MCF 10A (cell line): ENCODE measurements at regions of chrX and their contacts with region 1.

Region 1: DNA sequence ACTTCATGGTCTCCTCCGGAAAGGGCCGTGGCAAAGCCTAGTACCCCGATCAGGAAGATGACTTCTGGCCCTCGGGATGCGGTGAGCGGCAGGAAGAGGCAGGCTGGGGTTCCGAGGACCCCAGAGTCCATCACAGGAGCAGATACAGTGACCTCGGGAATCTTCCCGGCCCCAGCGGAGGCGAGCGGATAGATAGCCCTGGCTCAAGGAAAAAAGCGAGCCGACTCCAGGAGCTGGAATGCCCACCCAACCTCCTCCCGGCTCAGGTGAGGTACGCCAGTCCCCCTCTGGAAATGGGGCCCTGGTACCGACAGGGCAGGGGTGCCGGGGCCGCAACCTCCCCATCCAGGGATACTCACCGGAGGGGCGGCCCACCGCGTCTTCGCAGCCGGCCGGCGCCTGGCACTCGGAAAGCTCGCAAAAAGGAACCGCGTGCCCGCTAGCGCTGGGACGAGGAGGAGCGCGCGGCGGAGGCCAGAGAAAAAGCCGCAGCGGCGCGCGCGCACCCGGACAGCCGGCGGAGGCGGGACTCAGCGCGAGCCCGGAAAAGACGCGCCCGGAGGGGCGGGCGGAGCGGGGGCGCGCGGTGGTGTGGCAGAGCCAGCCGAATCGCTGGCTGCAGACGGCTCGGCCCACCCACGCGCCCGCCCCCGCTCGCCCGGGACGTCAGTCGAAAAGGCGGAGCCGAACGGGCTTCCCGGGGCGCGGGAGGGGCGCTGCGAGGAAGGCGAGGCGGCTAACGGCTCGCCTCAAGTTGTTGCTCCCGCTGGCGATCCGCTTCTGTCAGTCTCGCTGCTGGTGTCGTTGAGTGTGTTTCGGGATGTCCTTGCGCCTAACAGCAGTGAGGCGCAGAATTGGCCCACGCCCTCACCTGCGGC is at the start of gene ACSL4:
- DNase-seq: peak; percentile 82
- H3K4me3 Mint-ChIP-seq: peak within 1 kb of the TSS; percentile 90
- H3K27ac Mint-ChIP-seq: peak within 1 kb of the TSS; percentile 81
- H3K4me1 Mint-ChIP-seq: peaks cover 17% of the 10 kb centered on the region
- H3K27me3 Mint-ChIP-seq: peaks cover 26% of the 10 kb centered on the region
- CTCF ChIP-seq: no peak
- total RNA-seq, gene ACSL4: 48.0 and 70.1 TPM in 2 replicates

Region 2: GRCh38 chrX:109774706-109775105 is 41.7 kb after region 1 on chrX:
- CTCF ChIA-PET with region 1: no interaction called
- POLR2A ChIA-PET with region 1: interaction called, 20 read pairs
- intact Hi-C with region 1: no loop called
- DNase-seq: peak; percentile 81
- H3K4me3 Mint-ChIP-seq: no peak overlapping the region
- H3K27ac Mint-ChIP-seq: no peak overlapping the region
- H3K4me1 Mint-ChIP-seq: peaks cover 8% of the 10 kb centered on the region
- H3K27me3 Mint-ChIP-seq: peaks cover 38% of the 10 kb centered on the region
- CTCF ChIP-seq: no peak

Region 3: GRCh38 chrX:109797311-109797975 is 64.4 kb after region 1 on chrX:
- CTCF ChIA-PET with region 1: interaction called, 3 read pairs
- POLR2A ChIA-PET with region 1: interaction called, 14 read pairs
- intact Hi-C with region 1: no loop called
- DNase-seq: peak; percentile 17
- H3K4me3 Mint-ChIP-seq: no peak overlapping the region
- H3K27ac Mint-ChIP-seq: peak overlapping the region; percentile 8
- H3K4me1 Mint-ChIP-seq: peaks cover 15% of the 10 kb centered on the region
- H3K27me3 Mint-ChIP-seq: peaks cover 34% of the 10 kb centered on the region
- CTCF ChIP-seq: no peak

Region 4: GRCh38 chrX:109847257-109848187 is 114.5 kb after region 1 on chrX:
- CTCF ChIA-PET with region 1: interaction called, 3 read pairs
- POLR2A ChIA-PET with region 1: interaction called, 38 read pairs
- intact Hi-C with region 1: loop called (anchors 5 kb)
- DNase-seq: peak; percentile 90
- H3K4me3 Mint-ChIP-seq: no peak overlapping the region
- H3K27ac Mint-ChIP-seq: peak overlapping the region; percentile 1
- H3K4me1 Mint-ChIP-seq: peaks cover 6% of the 10 kb centered on the region
- H3K27me3 Mint-ChIP-seq: peaks cover 49% of the 10 kb centered on the region
- CTCF ChIP-seq: no peak